Transverse colon (tissue), 4 donors: ENCODE measurements at regions of chr9 and their contacts with region 1.

Region 1: DNA sequence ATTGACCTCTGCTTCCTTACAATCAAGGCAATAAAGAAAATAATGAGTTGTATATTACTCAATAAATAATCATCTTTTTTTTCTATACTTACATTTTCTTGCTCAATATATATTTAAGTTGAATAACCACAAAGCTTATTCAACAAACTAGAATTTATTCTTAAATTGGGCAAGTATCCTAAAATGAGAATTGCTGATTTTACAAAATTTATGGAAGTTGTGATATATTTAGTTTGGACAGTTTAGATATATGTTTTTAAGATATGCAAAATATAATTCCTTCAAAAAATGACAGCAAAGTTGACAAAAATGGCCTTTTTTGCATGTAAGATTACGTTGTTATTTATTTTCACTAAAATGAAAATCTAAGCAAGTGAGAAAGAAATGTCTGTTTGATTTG is 305.7 kb upstream of the GRIN3A start:
- DNase-seq: no peak
- H3K4me3 ChIP-seq: no peak overlapping the region
- H3K27ac ChIP-seq: no peak overlapping the region
- H3K4me1 ChIP-seq: no peaks in the 10 kb centered on the region
- H3K27me3 ChIP-seq: no peaks in the 10 kb centered on the region
- CTCF ChIP-seq: no peak
- EP300 ChIP-seq: no peak
- POLR2A ChIP-seq: no peak

Region 2: GRCh38 chr9:101977614-101978210 is 66.4 kb before region 1 on chr9:
- in situ Hi-C with region 1: no loop called
- intact Hi-C with region 1: loop called (anchors 2 kb)
- DNase-seq: no peak
- H3K4me3 ChIP-seq: no peak overlapping the region
- H3K27ac ChIP-seq: no peak overlapping the region
- H3K4me1 ChIP-seq: no peaks in the 10 kb centered on the region
- H3K27me3 ChIP-seq: no peaks in the 10 kb centered on the region
- CTCF ChIP-seq: peak; percentile 41 to 75 (median 56)
- EP300 ChIP-seq: no peak
- POLR2A ChIP-seq: no peak